Activated CD8-positive, alpha-beta T cell treated with anti-CD3 and anti-CD28 coated beads for 36 hours (primary cell): ENCODE measurements at regions of chr14 and their contacts with region 1.

Region 1: GRCh38 chr14:95527387-95528002 is 7.4 kb upstream of the GLRX5 start:
- DNase-seq: peak; percentile 80
- ATAC-seq: no peak
- H3K4me3 Mint-ChIP-seq: peak overlapping the region; percentile 27
- H3K27ac Mint-ChIP-seq: peak overlapping the region; percentile 100
- H3K4me1 Mint-ChIP-seq: peaks cover 79% of the 10 kb centered on the region
- H3K27me3 Mint-ChIP-seq: no peaks in the 10 kb centered on the region
- CTCF ChIP-seq: peak; percentile 95

Region 2: DNA sequence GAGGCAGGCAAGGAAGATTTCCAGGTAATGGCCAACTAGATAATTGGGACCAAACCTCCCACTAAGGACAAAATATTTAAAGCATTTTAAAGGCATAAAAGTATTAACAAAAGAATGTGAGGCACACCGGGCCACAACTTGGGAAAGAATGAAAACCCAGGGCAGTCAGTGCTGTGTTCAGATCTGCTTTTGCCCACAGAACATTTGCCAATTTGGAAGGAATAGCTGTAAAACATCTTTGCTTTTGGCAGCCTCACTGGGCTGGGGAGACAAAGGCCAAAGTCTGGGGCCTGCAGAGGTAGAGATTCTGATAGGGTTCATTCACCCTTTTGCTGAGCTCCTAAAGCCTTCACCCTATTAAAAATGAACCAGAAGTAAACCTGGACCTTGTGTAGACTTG is 93.4 kb before region 1 on chr14:
- CTCF ChIA-PET with region 1: interaction called, 16 read pairs
- POLR2A ChIA-PET with region 1: no interaction called
- intact Hi-C with region 1: no loop called
- DNase-seq: no peak
- ATAC-seq: no peak
- H3K4me3 Mint-ChIP-seq: no peak overlapping the region
- H3K27ac Mint-ChIP-seq: no peak overlapping the region
- H3K4me1 Mint-ChIP-seq: no peaks in the 10 kb centered on the region
- H3K27me3 Mint-ChIP-seq: no peaks in the 10 kb centered on the region
- CTCF ChIP-seq: no peak

Region 3: DNA sequence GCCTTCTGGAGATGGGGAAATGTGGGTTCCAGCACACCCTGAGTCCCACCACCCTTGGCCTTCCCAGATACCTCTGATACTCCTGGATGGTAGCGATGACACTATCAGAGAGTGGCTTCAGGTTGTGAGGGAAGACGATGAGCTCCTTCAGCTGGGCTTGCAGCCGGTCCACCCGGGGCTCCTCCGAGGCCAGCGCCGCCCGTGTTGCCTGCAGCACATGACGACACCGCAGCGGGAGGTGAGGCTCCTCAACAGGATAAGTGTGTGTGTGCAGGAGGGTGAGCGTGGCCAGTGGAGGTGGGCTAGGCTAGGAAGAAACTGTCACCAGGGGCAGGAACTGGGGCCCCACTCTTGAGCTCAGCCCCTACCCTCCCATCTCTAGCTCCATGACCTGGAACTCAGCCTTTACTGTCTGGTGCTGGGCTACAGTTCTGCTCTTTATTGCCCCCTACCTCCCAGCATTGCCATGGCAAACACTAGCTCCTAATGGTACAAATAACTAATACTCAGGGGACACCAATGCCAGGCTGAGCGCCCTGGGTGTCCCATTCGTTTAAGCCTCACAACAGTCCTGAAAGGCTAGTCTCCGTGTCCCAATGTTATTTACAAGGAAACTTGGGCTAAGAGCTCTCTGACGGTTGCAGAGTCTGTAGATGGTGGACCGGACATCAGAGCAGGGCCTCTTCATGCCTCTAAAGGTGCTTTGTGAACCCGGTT is 75.2 kb before region 1 on chr14:
- CTCF ChIA-PET with region 1: interaction called, 188 read pairs
- POLR2A ChIA-PET with region 1: interaction called, 3 read pairs
- intact Hi-C with region 1: no loop called
- DNase-seq: no peak
- ATAC-seq: peak; percentile 53
- H3K4me3 Mint-ChIP-seq: no peak overlapping the region
- H3K27ac Mint-ChIP-seq: no peak overlapping the region
- H3K4me1 Mint-ChIP-seq: no peaks in the 10 kb centered on the region
- H3K27me3 Mint-ChIP-seq: no peaks in the 10 kb centered on the region
- CTCF ChIP-seq: peak; percentile 37

Region 4: DNA sequence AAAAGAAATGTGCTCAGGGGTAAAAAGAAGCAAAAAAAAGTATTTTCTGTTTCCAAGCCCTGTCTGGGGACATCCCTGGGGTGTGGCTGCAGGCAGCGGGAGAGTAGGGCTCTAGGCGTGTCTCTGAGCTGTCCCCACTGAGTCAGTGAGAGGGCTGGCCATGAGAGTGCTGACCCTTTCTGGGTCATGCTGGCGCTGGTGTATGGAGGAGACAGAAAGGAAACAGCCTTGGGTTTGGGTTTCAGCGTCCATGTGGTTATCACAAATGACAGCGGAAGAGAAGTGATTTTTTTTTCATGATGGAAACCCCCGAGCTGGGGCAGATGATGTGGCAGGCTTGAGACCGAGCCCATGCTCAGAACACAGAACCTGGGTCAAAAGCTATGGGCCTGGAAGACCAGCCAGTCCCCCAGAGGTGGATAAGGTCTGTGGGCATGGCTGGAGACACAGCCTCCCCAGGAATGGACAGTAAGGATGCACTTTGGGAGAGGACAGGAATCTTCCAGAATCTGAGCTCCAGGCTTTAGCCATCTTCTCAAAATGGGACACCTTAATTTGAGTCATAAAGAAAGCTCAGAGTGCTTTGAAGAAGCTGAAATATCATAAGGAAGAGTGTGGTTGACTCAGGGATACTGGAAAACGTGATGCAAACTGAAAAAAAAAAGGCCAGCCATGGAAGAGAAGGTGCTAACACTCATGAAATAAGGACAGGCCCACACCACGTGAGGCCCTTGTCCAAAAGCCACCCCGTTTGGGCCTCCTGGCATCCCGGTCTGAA is 47.2 kb before region 1 on chr14:
- CTCF ChIA-PET with region 1: interaction called, 12 read pairs
- POLR2A ChIA-PET with region 1: interaction called, 3 read pairs
- intact Hi-C with region 1: no loop called
- DNase-seq: peak; percentile 55
- ATAC-seq: peak; percentile 79
- H3K4me3 Mint-ChIP-seq: peak overlapping the region; percentile 13
- H3K27ac Mint-ChIP-seq: peak overlapping the region; percentile 81
- H3K4me1 Mint-ChIP-seq: peaks cover 43% of the 10 kb centered on the region
- H3K27me3 Mint-ChIP-seq: no peaks in the 10 kb centered on the region
- CTCF ChIP-seq: no peak

Region 5: DNA sequence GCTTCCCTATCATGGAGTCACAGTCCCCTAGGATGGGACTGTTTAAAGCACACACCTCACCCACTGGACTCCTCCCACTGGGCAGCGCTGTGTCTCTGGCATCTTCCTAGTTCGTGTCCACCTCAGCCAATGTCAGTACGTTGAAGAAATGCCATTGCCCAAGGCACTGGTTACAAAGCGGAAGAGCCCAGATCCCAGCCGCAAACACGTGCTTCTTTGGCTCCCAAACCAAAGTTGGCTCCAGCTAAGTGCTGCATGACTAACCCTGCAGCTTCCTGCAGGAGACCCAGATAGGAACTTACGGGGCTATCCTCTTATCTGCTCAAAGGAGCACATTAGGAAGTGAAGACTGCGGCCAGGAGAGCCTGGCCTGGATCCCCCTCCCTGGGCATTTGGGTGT is 20.3 kb before region 1 on chr14:
- CTCF ChIA-PET with region 1: interaction called, 11 read pairs
- POLR2A ChIA-PET with region 1: interaction called, 8 read pairs
- intact Hi-C with region 1: no loop called
- DNase-seq: no peak
- ATAC-seq: no peak
- H3K4me3 Mint-ChIP-seq: no peak overlapping the region
- H3K27ac Mint-ChIP-seq: peak overlapping the region; percentile 34
- H3K4me1 Mint-ChIP-seq: peaks cover 72% of the 10 kb centered on the region
- H3K27me3 Mint-ChIP-seq: no peaks in the 10 kb centered on the region
- CTCF ChIP-seq: no peak